WTC11 (cell line): ENCODE measurements at regions of chr19 and their contacts with region 1.

Region 1: DNA sequence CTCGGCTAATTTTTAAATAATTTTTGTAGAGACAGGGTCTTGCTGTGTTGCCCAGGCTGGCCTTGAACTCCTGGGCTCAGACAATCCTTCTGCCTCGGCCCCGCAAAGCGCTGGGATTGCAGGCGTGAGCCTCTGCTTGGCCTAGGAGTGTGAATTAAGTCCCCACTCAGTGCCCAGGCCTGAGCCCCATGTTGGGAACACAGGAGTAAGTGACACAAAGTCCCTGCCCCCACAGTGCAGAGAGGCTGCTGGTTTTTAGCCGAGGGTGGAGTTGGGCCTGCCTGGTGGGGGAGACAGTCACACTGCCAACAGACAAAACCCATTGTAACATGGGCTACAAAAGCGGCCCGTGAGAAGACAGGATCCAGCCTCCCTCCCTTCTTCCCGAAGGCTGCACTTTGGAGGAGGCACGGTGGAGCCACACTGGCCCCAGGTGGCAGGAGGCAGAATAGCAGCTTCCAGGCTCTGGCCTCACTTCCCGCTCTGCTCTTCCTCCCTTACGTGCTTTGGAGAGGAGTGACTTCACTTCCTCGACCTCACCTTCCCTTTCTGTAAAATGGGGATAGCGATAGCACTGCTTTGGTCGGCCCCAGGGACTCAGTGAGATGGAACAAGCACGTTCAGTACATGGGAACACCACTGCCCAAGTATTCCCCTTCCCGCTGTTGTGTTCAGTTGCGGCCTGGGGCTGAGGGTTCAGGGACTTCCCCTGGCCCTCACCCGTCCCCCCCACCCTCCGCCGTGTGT is 15.2 kb upstream of the EHD2 start:
- DNase-seq: peak; percentile 86
- ATAC-seq: peak; percentile 84
- H3K4me3 Mint-ChIP-seq: no peak overlapping the region
- H3K27ac Mint-ChIP-seq: peak overlapping the region; percentile 91
- H3K4me1 Mint-ChIP-seq: 0 out of 2 replicates have a peak, but pooled peaks cover 2% of the 10 kb centered on the region
- H3K27me3 Mint-ChIP-seq: no peaks in the 10 kb centered on the region
- CTCF ChIP-seq: peak; percentile 93

Region 2: DNA sequence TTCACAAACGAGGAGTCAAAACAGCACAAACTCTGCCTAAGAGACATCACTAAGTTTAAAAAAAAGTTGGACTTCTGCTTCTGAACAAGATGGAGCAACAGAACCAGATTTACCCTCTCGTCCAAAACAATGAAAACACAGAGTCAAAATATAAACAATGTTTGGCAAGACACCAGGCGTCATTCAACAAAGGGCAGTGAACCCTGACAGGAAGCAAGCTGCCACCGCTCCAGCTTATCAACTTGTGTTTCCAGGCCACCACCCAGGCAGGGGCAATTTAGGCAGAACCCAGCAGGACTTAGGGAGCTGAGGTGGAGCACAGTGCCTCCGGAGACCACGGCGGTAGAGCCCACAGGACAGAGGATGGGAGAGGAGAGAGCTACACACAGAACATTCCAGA is 174.6 kb before region 1 on chr19:
- CTCF ChIA-PET with region 1: interaction called, 10 read pairs
- POLR2A ChIA-PET with region 1: interaction called, 9 read pairs
- DNase-seq: no peak
- ATAC-seq: no peak
- H3K4me3 Mint-ChIP-seq: no peak overlapping the region
- H3K27ac Mint-ChIP-seq: no peak overlapping the region
- H3K4me1 Mint-ChIP-seq: peaks cover 5% of the 10 kb centered on the region; the same call in 1 of the 2 replicates
- H3K27me3 Mint-ChIP-seq: peaks cover 8% of the 10 kb centered on the region
- CTCF ChIP-seq: no peak

Region 3: GRCh38 chr19:47608969-47609905 is 88.8 kb before region 1 on chr19 and contains the start of gene BICRA:
- CTCF ChIA-PET with region 1: interaction called, 12 read pairs
- POLR2A ChIA-PET with region 1: no interaction called
- DNase-seq: peak; percentile 81
- ATAC-seq: peak; percentile 23
- H3K4me3 Mint-ChIP-seq: peak within 1 kb of the TSS; percentile 86
- H3K27ac Mint-ChIP-seq: peak within 1 kb of the TSS; percentile 93
- H3K4me1 Mint-ChIP-seq: peaks cover 34% of the 10 kb centered on the region
- H3K27me3 Mint-ChIP-seq: no peaks in the 10 kb centered on the region; the same call in 1 of the 2 replicates
- CTCF ChIP-seq: no peak
- total RNA-seq, gene BICRA: 23.0 to 30.3 TPM (median 26.0 TPM) in 3 replicates

Region 4: GRCh38 chr19:47722749-47723140 is 24.7 kb after region 1 on chr19:
- CTCF ChIA-PET with region 1: no interaction called
- POLR2A ChIA-PET with region 1: no interaction called
- DNase-seq: no peak
- ATAC-seq: no peak
- H3K4me3 Mint-ChIP-seq: no peak overlapping the region
- H3K27ac Mint-ChIP-seq: no peak overlapping the region
- H3K4me1 Mint-ChIP-seq: peaks cover 4% of the 10 kb centered on the region; the same call in 1 of the 2 replicates
- H3K27me3 Mint-ChIP-seq: no peaks in the 10 kb centered on the region
- CTCF ChIP-seq: no peak

Region 5: DNA sequence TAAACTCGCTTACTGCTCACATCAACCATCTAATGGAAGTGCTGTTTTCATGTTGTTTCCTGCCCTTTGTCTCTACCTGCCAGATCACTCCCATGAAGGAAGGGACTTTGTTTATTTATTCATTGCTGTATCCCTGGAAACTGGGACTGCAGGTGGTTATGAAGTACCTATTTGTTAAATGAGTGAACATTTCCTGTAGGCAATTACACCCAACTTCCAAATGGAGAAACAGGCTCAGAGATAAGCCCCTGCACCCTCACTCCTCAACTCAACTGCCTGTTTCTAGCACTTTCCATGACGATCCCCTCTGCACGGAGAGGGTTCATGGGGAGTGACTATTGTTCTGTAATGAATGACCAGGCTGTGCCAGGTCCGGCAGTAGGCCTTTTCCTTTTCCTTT is 78.5 kb after region 1 on chr19:
- CTCF ChIA-PET with region 1: no interaction called
- POLR2A ChIA-PET with region 1: no interaction called
- DNase-seq: no peak
- ATAC-seq: peak; percentile 5
- H3K4me3 Mint-ChIP-seq: peak overlapping the region; percentile 92
- H3K27ac Mint-ChIP-seq: peak overlapping the region; percentile 84
- H3K4me1 Mint-ChIP-seq: peaks cover 34% of the 10 kb centered on the region
- H3K27me3 Mint-ChIP-seq: no peaks in the 10 kb centered on the region
- CTCF ChIP-seq: no peak